ENCODE measurements at regions of chr17 and their contacts with region 1.

Region 1: GRCh38 chr17:49031965-49032928 is 35.1 kb downstream of the IGF2BP1 start:
- DNase-seq: no peak
- H3K4me3 ChIP-seq: no peak overlapping the region
- H3K27ac ChIP-seq: no peak overlapping the region
- H3K4me1 ChIP-seq: peaks cover 0 to 11% (median 3%) of the 10 kb centered on the region in 4 donors
- H3K27me3 ChIP-seq: no peaks in the 10 kb centered on the region
- CTCF ChIP-seq: peak; percentile 45 to 74 (median 53)
- EP300 ChIP-seq: no peak
- POLR2A ChIP-seq: no peak

Region 2: GRCh38 chr17:48678141-48678971 is 353.9 kb before region 1 on chr17:
- intact Hi-C with region 1: loop called (anchors 10 kb)
- DNase-seq: peak; percentile 70
- H3K4me3 ChIP-seq: no peak overlapping the region
- H3K27ac ChIP-seq: no peak overlapping the region
- H3K4me1 ChIP-seq: peaks cover 0 to 7% (median 6%) of the 10 kb centered on the region in 4 donors
- H3K27me3 ChIP-seq: peaks cover 3 to 33% (median 8%) of the 10 kb centered on the region in 3 donors
- CTCF ChIP-seq: peak; percentile 47 to 92 (median 74)
- EP300 ChIP-seq: no peak
- POLR2A ChIP-seq: no peak

Region 3: GRCh38 chr17:48804925-48805411 is 227.3 kb before region 1 on chr17:
- intact Hi-C with region 1: loop called (anchors 5 kb)
- DNase-seq: peak; percentile 74
- H3K4me3 ChIP-seq: no peak overlapping the region
- H3K27ac ChIP-seq: no peak overlapping the region
- H3K4me1 ChIP-seq: peaks cover 0 to 33% (median 13%) of the 10 kb centered on the region in 4 donors
- H3K27me3 ChIP-seq: no peaks in the 10 kb centered on the region
- CTCF ChIP-seq: peak; percentile 85 to 94 (median 90)
- EP300 ChIP-seq: no peak
- POLR2A ChIP-seq: no peak

Region 4: GRCh38 chr17:48892940-48893645 is 139.2 kb before region 1 on chr17:
- intact Hi-C with region 1: loop called (anchors 5 kb)
- DNase-seq: no peak
- H3K4me3 ChIP-seq: peak overlapping the region; percentile 70 to 90 (median 77)
- H3K27ac ChIP-seq: peak overlapping the region; percentile 80 to 85 (median 84)
- H3K4me1 ChIP-seq: peaks cover 0 to 21% (median 17%) of the 10 kb centered on the region in 4 donors
- H3K27me3 ChIP-seq: no peaks in the 10 kb centered on the region
- CTCF ChIP-seq: no peak
- EP300 ChIP-seq: no peak
- POLR2A ChIP-seq: no peak

Region 5: GRCh38 chr17:48944519-48945260 is 87.6 kb before region 1 on chr17 and contains the start of gene SNF8:
- intact Hi-C with region 1: loop called (anchors 10 kb)
- DNase-seq: peak; percentile 93
- H3K4me3 ChIP-seq: peak within 1 kb of the TSS; percentile 67 to 86 (median 74)
- H3K27ac ChIP-seq: peak within 1 kb of the TSS; percentile 85 to 88 (median 86)
- H3K4me1 ChIP-seq: peaks cover 0 to 26% (median 22%) of the 10 kb centered on the region in 4 donors
- H3K27me3 ChIP-seq: no peaks in the 10 kb centered on the region
- CTCF ChIP-seq: no peak
- EP300 ChIP-seq: no peak
- POLR2A ChIP-seq: peak; percentile 58 to 59
- total RNA-seq, gene SNF8: 74.1 to 94.5 (median 85.2) TPM

Region 6: DNA sequence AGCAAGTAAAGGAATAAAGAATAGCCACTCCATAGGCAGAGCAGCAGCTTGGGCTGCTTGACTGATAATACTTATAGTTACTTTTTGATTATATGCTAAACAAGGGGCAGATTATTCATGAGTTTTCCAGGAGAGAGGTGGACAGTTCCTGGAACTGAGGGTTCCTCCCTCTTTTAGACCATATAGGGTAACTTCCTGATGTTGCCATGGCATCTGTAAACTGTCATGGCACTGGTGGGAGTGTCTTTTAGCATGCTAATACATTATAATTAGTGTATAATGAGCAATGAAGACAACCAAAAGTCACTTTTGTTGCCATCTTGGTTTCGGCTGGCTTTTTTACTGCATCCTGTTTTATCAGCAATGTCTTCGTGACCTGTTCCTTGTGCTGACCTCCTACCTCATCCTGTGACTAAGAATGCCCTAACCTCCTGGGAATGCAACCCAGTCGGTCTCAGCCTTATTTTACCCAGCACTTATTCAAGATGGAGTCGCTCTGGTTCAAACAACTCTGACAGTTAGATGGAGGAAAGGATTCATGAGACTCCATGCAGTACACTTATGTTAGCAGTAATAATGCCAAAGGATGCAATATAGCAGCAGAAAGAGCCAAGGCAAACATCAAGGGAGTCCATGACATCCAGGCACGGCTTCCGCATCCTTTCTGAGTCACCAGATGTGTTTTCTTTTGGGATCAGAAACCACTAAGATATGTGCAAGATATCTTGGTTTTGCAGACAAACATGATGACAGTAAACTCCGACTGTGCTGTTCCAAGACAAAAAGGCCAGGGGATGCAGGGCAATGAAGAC is 44.5 kb after region 1 on chr17:
- intact Hi-C with region 1: no loop called
- DNase-seq: no peak
- H3K4me3 ChIP-seq: no peak overlapping the region
- H3K27ac ChIP-seq: no peak overlapping the region
- H3K4me1 ChIP-seq: no peaks in the 10 kb centered on the region
- H3K27me3 ChIP-seq: peaks cover 0 to 8% (median 0%) of the 10 kb centered on the region in 3 donors
- CTCF ChIP-seq: no peak
- EP300 ChIP-seq: no peak
- POLR2A ChIP-seq: no peak